ENCODE measurements at regions of chr17 and their contacts with region 1.

Region 1: GRCh38 chr17:64920026-64920418 is 744 bp upstream of the LRRC37A3 start:
- DNase-seq: no peak
- ATAC-seq: no peak
- H3K4me3 ChIP-seq: peak overlapping the region in 4 of 5 experiments; percentile 58 to 85 (median 66)
- H3K4me3 Mint-ChIP-seq: peak overlapping the region; percentile 96
- H3K27ac ChIP-seq: peak overlapping the region; percentile 84 to 90
- H3K27ac Mint-ChIP-seq: peak overlapping the region; percentile 99
- H3K4me1 ChIP-seq: peaks cover 21 to 26% of the 10 kb centered on the region in 2 donors
- H3K4me1 Mint-ChIP-seq: peaks cover 39% of the 10 kb centered on the region
- H3K27me3 ChIP-seq: no peaks in the 10 kb centered on the region
- H3K27me3 Mint-ChIP-seq: no peaks in the 10 kb centered on the region
- CTCF ChIP-seq: no peak

Region 2: GRCh38 chr17:64661976-64662773 is 257.8 kb before region 1 on chr17 and contains the start of gene SMURF2:
- CTCF ChIA-PET with region 1: no interaction called
- POLR2A ChIA-PET with region 1: no interaction called
- intact Hi-C with region 1: loop called (anchors 5 kb)
- DNase-seq: peak; percentile 90
- ATAC-seq: peak; percentile 89
- H3K4me3 ChIP-seq: peak within 1 kb of the TSS; percentile 50 to 84 (median 68)
- H3K4me3 Mint-ChIP-seq: peak within 1 kb of the TSS; percentile 97
- H3K27ac ChIP-seq: peak within 1 kb of the TSS; percentile 59 to 75
- H3K27ac Mint-ChIP-seq: peak within 1 kb of the TSS; percentile 98
- H3K4me1 ChIP-seq: peaks cover 11 to 21% of the 10 kb centered on the region in 2 donors
- H3K4me1 Mint-ChIP-seq: peaks cover 28% of the 10 kb centered on the region
- H3K27me3 ChIP-seq: no peaks in the 10 kb centered on the region
- H3K27me3 Mint-ChIP-seq: no peaks in the 10 kb centered on the region
- CTCF ChIP-seq: peak; percentile 12
- total RNA-seq, gene SMURF2: 32.8 and 37.1 TPM in 2 replicates

Region 3: DNA sequence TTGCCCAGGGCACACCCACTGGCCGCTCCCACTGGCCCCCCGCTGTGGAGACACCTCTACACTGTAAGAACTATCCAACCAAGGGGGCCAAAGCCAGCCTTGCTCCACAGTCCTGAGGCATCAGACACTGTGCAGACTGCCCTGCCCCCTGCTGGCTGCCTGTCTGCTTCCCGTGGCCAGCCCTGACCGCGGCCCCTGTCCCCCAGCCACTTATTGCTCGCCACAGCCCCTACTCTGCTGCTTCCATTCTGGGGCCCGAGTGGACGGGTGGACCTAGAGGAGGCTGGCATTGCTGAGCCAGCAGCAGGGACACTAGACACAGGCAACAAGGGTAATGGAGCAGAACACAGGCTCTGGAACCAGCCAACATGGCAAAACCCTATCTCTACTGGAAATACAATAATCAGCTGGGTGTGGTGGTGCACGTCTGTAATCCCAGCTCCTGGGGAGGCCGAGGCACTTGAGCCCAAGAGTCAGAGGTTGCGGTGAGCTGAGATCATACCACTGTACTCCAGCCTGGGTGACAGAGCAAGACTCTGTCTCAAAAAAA is 19.0 kb after region 1 on chr17:
- CTCF ChIA-PET with region 1: interaction called, 24 read pairs
- POLR2A ChIA-PET with region 1: no interaction called
- intact Hi-C with region 1: no loop called
- DNase-seq: peak; percentile 61
- ATAC-seq: peak; percentile 76
- H3K4me3 ChIP-seq: no peak overlapping the region
- H3K4me3 Mint-ChIP-seq: no peak overlapping the region
- H3K27ac ChIP-seq: no peak overlapping the region
- H3K27ac Mint-ChIP-seq: no peak overlapping the region
- H3K4me1 ChIP-seq: peaks cover 0 to 6% of the 10 kb centered on the region in 2 donors
- H3K4me1 Mint-ChIP-seq: peaks cover 4% of the 10 kb centered on the region
- H3K27me3 ChIP-seq: peaks cover 0 to 5% (median 0%) of the 10 kb centered on the region in 4 experiments
- H3K27me3 Mint-ChIP-seq: no peaks in the 10 kb centered on the region
- CTCF ChIP-seq: peak; percentile 68

Region 4: GRCh38 chr17:65122836-65123756 is 203.1 kb after region 1 on chr17:
- CTCF ChIA-PET with region 1: interaction called, 5 read pairs
- POLR2A ChIA-PET with region 1: interaction called, 3 read pairs
- intact Hi-C with region 1: loop called (anchors 1 kb)
- DNase-seq: peak; percentile 93
- ATAC-seq: peak; percentile 88
- H3K4me3 ChIP-seq: peak overlapping the region; percentile 57 to 79 (median 68)
- H3K4me3 Mint-ChIP-seq: peak overlapping the region; percentile 95
- H3K27ac ChIP-seq: peak overlapping the region; percentile 64 to 84
- H3K27ac Mint-ChIP-seq: peak overlapping the region; percentile 97
- H3K4me1 ChIP-seq: peaks cover 9 to 13% of the 10 kb centered on the region in 2 donors
- H3K4me1 Mint-ChIP-seq: peaks cover 14% of the 10 kb centered on the region
- H3K27me3 ChIP-seq: peaks cover 0 to 7% (median 0%) of the 10 kb centered on the region in 4 experiments
- H3K27me3 Mint-ChIP-seq: no peaks in the 10 kb centered on the region
- CTCF ChIP-seq: no peak

Region 5: DNA sequence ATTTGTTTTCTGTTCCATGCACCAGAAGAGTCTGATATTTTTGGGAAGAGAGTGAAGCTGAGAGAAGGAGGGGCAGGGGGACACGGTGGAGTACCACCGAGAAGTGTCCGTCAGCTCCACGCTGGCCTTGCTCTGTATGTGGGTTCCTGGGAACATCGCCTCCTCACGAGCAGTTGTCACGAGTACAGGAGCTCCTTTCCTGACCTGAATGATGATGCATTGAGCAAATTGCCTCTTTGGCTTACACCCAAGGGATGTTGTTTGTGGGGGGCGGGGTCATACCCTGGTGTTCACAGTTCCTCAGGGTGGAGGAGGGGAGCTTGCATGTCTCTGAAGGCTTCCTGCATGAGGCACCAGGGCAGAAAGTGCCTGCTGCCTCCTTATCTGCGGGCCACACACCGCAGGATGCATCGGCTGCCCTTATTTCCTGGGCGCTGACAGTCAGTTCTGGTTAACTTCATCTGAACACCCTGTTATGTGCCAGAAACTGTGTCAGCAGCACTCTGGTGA is 253.3 kb after region 1 on chr17:
- CTCF ChIA-PET with region 1: no interaction called
- POLR2A ChIA-PET with region 1: no interaction called
- intact Hi-C with region 1: no loop called
- DNase-seq: no peak
- ATAC-seq: peak; percentile 54
- H3K4me3 ChIP-seq: no peak overlapping the region
- H3K4me3 Mint-ChIP-seq: no peak overlapping the region
- H3K27ac ChIP-seq: no peak overlapping the region
- H3K27ac Mint-ChIP-seq: no peak overlapping the region
- H3K4me1 ChIP-seq: peaks cover 8 to 14% of the 10 kb centered on the region in 2 donors
- H3K4me1 Mint-ChIP-seq: peaks cover 2% of the 10 kb centered on the region
- H3K27me3 ChIP-seq: peaks cover 0 to 7% (median 0%) of the 10 kb centered on the region in 4 experiments
- H3K27me3 Mint-ChIP-seq: no peaks in the 10 kb centered on the region
- CTCF ChIP-seq: no peak

Region 6: GRCh38 chr17:65198653-65199382 is 278.8 kb after region 1 on chr17:
- CTCF ChIA-PET with region 1: no interaction called
- POLR2A ChIA-PET with region 1: no interaction called
- intact Hi-C with region 1: loop called (anchors 2 kb)
- DNase-seq: peak; percentile 73
- ATAC-seq: peak; percentile 53
- H3K4me3 ChIP-seq: no peak overlapping the region
- H3K4me3 Mint-ChIP-seq: no peak overlapping the region
- H3K27ac ChIP-seq: no peak overlapping the region
- H3K27ac Mint-ChIP-seq: no peak overlapping the region
- H3K4me1 ChIP-seq: no peaks in the 10 kb centered on the region
- H3K4me1 Mint-ChIP-seq: peaks cover 2% of the 10 kb centered on the region
- H3K27me3 ChIP-seq: no peaks in the 10 kb centered on the region
- H3K27me3 Mint-ChIP-seq: no peaks in the 10 kb centered on the region
- CTCF ChIP-seq: peak; percentile 89

Measured in B cell (primary cell).